ENCODE measurements at regions of chr9 and their contacts with region 1.

Region 1: GRCh38 chr9:112097712-112098688 is 77.1 kb downstream of the SUSD1 start:
- DNase-seq: peak; percentile 69
- CTCF ChIP-seq: peak; percentile 88

Region 2: DNA sequence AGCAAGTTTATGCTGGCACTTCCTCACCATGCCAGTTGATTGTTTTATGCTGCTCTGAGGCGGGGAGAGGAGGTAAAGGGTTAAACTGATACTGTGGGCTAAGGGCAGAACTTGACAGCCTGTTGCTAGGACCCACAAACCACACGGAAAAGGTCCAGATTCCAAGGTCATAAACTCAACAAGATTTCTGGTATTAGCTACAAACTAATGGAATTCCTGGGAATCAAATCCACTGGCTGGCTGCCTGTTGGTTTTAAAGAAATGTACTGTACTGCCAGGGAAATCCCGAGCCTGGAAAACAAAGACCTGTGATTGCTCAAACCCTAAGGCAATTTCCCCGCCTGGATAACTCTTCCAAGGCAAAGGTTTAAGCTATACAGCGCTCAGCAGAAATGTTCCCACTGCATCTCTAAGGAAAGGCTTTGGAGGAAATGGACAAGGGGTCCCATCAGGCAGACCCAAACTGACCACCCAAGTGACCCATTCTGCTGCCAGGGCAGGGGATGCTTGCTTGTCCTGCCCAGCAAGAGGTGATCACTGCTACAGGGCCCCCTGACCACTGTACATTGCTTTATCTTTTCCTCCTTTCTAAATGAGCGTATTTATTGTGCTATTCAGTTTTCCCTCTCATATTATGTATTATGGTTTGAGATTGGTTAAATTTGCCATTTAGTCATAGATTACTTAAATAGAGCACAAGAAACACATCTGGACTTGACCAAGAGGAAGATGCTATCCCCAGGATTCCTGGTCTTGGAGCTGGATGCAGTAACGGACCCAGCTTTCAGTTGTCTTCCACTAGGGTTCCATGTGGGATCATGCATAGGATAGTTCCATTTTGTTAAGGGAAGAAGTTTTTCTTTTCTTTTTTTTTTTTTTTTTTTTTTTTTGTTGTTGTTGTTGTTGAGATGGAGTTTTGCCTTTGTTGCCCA is 47.2 kb before region 1 on chr9:
- CTCF ChIA-PET with region 1: no interaction called
- POLR2A ChIA-PET with region 1: no interaction called
- DNase-seq: no peak
- CTCF ChIP-seq: no peak

Region 3: GRCh38 chr9:112074250-112075008 is 23.6 kb before region 1 on chr9:
- CTCF ChIA-PET with region 1: interaction called, 51 read pairs
- POLR2A ChIA-PET with region 1: no interaction called
- DNase-seq: peak; percentile 45
- CTCF ChIP-seq: peak; percentile 87

Region 4: DNA sequence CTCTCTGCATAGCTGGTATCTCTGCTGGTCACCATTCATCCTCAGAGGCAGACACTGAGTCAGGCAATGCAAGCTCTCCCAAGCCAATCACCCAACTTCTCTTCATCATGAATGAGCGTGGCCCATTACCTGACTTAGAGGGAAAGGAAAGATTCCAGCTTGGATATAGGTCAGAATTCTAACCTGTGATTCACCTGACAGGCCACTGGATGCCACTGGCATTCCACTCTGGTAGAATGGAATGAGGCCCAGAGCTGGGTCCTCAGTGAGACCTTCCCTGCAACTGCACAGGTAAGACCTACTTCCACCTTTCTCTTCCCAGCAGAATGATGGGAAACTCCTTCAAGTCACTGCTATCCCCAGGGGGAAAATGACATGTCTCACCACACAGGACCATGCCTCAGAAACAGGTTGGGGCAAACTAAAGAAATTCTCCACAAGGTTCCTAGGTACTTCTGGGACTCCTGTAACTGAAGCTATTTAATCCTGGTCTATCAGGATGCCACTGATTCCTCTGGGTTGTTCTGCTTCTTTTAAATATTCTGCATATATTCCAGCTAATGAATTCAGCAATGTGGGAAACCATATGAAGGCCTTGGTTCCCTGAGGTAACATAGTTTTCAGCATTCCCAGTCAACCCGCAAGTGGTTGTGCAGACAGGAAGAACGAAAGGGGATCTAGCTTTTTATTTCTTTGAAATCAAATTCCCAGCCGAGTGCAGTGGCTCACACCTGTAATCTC is 15.1 kb after region 1 on chr9:
- CTCF ChIA-PET with region 1: interaction called, 30 read pairs
- POLR2A ChIA-PET with region 1: interaction called, 3 read pairs
- DNase-seq: peak; percentile 29
- CTCF ChIP-seq: peak; percentile 50

Region 5: GRCh38 chr9:112125951-112126388 is 28.0 kb after region 1 on chr9:
- CTCF ChIA-PET with region 1: interaction called, 27 read pairs
- POLR2A ChIA-PET with region 1: no interaction called
- DNase-seq: no peak
- CTCF ChIP-seq: no peak

Region 6: GRCh38 chr9:112361601-112362000 is 263.6 kb after region 1 on chr9:
- CTCF ChIA-PET with region 1: interaction called, 79 read pairs
- POLR2A ChIA-PET with region 1: interaction called, 3 read pairs
- DNase-seq: peak; percentile 29
- CTCF ChIP-seq: peak; percentile 31

Measured in GM10248 (cell line).